Mammary epithelial cell (primary cell): ENCODE measurements at regions of chr7 and their contacts with region 1.

Region 1: GRCh38 chr7:35831208-35831607 is 30.4 kb downstream of the SEPTIN7 start:
- DNase-seq: no peak
- H3K4me3 ChIP-seq: no peak overlapping the region
- H3K27ac ChIP-seq: no peak overlapping the region
- H3K4me1 ChIP-seq: peaks cover 16% of the 10 kb centered on the region
- H3K27me3 ChIP-seq: no peaks in the 10 kb centered on the region
- CTCF ChIP-seq: no peak

Region 2: DNA sequence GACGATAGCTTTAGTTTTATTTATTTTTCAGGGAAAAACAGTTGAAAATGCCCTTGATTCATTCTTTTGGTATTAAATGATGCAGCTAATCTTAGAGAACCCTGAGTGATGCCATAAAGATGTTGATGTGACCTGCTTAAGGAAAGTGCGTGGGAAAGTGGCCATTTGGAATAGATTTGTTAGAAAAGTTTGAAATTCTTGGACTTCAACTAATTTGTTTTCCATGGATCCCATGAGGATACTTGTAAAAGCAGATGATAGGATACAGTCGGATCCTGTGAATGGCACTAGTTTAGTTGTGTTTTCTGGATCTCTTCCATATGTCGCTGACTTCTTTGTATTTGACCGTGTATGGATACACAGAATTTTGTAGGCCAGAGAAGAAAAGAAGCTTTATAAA is 38.6 kb after region 1 on chr7:
- CTCF ChIA-PET with region 1: no interaction called
- dilution Hi-C with region 1: loop called (anchors 10 kb)
- in situ Hi-C with region 1: no loop called
- intact Hi-C with region 1: no loop called
- DNase-seq: no peak
- H3K4me3 ChIP-seq: no peak overlapping the region
- H3K27ac ChIP-seq: no peak overlapping the region
- H3K4me1 ChIP-seq: no peaks in the 10 kb centered on the region
- H3K27me3 ChIP-seq: no peaks in the 10 kb centered on the region
- CTCF ChIP-seq: no peak